ENCODE measurements at regions of chr11 and their contacts with region 1.

Region 1: GRCh38 chr11:24264868-24265267 is 232.0 kb upstream of the LUZP2 start:
- DNase-seq: no peak
- H3K4me3 Mint-ChIP-seq: no peak overlapping the region
- H3K27ac Mint-ChIP-seq: no peak overlapping the region
- H3K4me1 Mint-ChIP-seq: no peaks in the 10 kb centered on the region
- H3K27me3 Mint-ChIP-seq: no peaks in the 10 kb centered on the region
- CTCF ChIP-seq: no peak

Region 2: GRCh38 chr11:24295360-24295759 is 30.5 kb after region 1 on chr11:
- CTCF ChIA-PET with region 1: no interaction called
- intact Hi-C with region 1: loop called (anchors 1 kb)
- DNase-seq: no peak
- H3K4me3 Mint-ChIP-seq: no peak overlapping the region
- H3K27ac Mint-ChIP-seq: no peak overlapping the region
- H3K4me1 Mint-ChIP-seq: peaks cover 6% of the 10 kb centered on the region
- H3K27me3 Mint-ChIP-seq: no peaks in the 10 kb centered on the region
- CTCF ChIP-seq: no peak

Region 3: GRCh38 chr11:24543786-24544185 is 278.9 kb after region 1 on chr11:
- CTCF ChIA-PET with region 1: no interaction called
- intact Hi-C with region 1: no loop called
- DNase-seq: no peak
- H3K4me3 Mint-ChIP-seq: no peak overlapping the region
- H3K27ac Mint-ChIP-seq: no peak overlapping the region
- H3K4me1 Mint-ChIP-seq: no peaks in the 10 kb centered on the region
- H3K27me3 Mint-ChIP-seq: no peaks in the 10 kb centered on the region
- CTCF ChIP-seq: no peak

Measured in Calu3 (cell line).